ENCODE measurements at regions of chr17 and their contacts with region 1.

Region 1: DNA sequence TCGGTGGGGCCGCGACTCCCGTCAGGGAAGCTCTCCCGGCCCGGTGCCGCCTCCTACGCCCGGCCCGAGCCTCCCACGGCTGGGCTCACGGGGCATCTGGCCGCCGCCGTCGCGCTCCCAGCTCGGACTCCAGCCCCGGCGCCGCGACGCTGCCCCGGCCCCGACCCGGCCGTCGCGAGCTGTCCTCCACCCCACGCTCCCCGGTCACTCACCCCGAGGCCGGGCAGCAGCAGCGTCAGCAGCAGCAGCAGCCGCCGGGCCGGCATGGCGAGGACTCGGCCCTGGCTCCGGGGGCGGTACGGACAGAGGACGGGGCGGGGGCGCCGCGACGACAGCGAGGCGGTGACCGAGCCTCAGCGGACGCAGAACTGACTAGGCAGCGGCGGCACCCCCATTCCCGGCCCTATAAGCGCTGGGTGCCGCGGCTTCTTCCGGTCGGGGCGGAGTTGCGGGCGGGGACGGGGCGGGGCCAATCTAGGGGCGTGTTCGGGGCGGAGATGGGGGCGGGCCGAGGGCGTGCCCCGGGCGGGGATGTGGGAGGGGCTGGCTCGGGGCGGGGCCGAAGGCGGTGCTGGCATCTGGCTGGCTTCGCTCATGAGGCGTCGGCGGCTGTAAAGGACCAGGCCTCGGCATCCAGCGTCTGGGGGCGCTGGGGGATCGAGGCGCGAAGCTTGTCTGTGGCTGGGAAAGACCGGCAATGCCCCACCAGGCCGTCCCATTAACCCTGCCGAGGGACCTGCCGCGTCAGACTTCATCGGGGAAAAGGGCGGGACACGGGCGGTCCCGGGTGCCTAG is at the start of gene ERN1:
- DNase-seq: peak; percentile 99
- H3K4me3 ChIP-seq: peak within 1 kb of the TSS; percentile 72 to 82
- H3K27ac ChIP-seq: peak within 1 kb of the TSS; percentile 62 to 68
- H3K4me1 ChIP-seq: peaks cover 13 to 18% of the 10 kb centered on the region in 2 experiments; a peak in 3 of 4 replicates
- H3K27me3 ChIP-seq: no peaks in the 10 kb centered on the region
- CTCF ChIP-seq: 0 out of 2 replicates have a peak, but pooled peaks have one; percentile 8
- EP300 ChIP-seq: no peak
- RAD21 ChIP-seq: 0 out of 2 replicates have a peak, but pooled peaks have one; percentile 23
- polyA plus RNA-seq, gene ERN1: 6.9 and 7.3 TPM in 2 replicates

Region 2: GRCh38 chr17:63919311-63919723 is 210.6 kb before region 1 on chr17:
- CTCF ChIA-PET with region 1: interaction called, 109 read pairs
- POLR2A ChIA-PET with region 1: interaction called, 3 read pairs
- DNase-seq: peak; percentile 89
- H3K4me3 ChIP-seq: no peak overlapping the region
- H3K27ac ChIP-seq: no peak overlapping the region
- H3K4me1 ChIP-seq: no peaks in the 10 kb centered on the region
- H3K27me3 ChIP-seq: peaks cover 31% of the 10 kb centered on the region
- CTCF ChIP-seq: peak; percentile 96
- EP300 ChIP-seq: no peak
- RAD21 ChIP-seq: peak; percentile 92

Region 3: GRCh38 chr17:64005734-64006167 is 124.2 kb before region 1 on chr17:
- CTCF ChIA-PET with region 1: interaction called, 10 read pairs
- POLR2A ChIA-PET with region 1: no interaction called
- DNase-seq: peak; percentile 76
- H3K4me3 ChIP-seq: no peak overlapping the region
- H3K27ac ChIP-seq: peak overlapping the region in 1 of 2 experiments; percentile 53; a peak in 1 of 4 replicates
- H3K4me1 ChIP-seq: peaks cover 0 to 22% of the 10 kb centered on the region in 2 experiments; a peak in 1 of 4 replicates
- H3K27me3 ChIP-seq: no peaks in the 10 kb centered on the region
- CTCF ChIP-seq: no peak
- EP300 ChIP-seq: no peak
- RAD21 ChIP-seq: no peak

Region 4: GRCh38 chr17:64056269-64057005 is 73.5 kb before region 1 on chr17:
- CTCF ChIA-PET with region 1: interaction called, 160 read pairs
- POLR2A ChIA-PET with region 1: no interaction called
- DNase-seq: no peak
- H3K4me3 ChIP-seq: no peak overlapping the region
- H3K27ac ChIP-seq: no peak overlapping the region
- H3K4me1 ChIP-seq: no peaks in the 10 kb centered on the region
- H3K27me3 ChIP-seq: no peaks in the 10 kb centered on the region
- CTCF ChIP-seq: no peak
- EP300 ChIP-seq: no peak
- RAD21 ChIP-seq: no peak

Region 5: GRCh38 chr17:64103391-64104364 is 26.3 kb before region 1 on chr17:
- CTCF ChIA-PET with region 1: interaction called, 10 read pairs
- POLR2A ChIA-PET with region 1: interaction called, 3 read pairs
- DNase-seq: no peak
- H3K4me3 ChIP-seq: no peak overlapping the region
- H3K27ac ChIP-seq: no peak overlapping the region
- H3K4me1 ChIP-seq: no peaks in the 10 kb centered on the region
- H3K27me3 ChIP-seq: no peaks in the 10 kb centered on the region
- CTCF ChIP-seq: no peak
- EP300 ChIP-seq: no peak; a peak in 1 of 4 replicates
- RAD21 ChIP-seq: no peak

Region 6: GRCh38 chr17:64174686-64175456 is 44.9 kb after region 1 on chr17:
- CTCF ChIA-PET with region 1: interaction called, 12 read pairs
- POLR2A ChIA-PET with region 1: no interaction called
- DNase-seq: no peak
- H3K4me3 ChIP-seq: no peak overlapping the region
- H3K27ac ChIP-seq: peak overlapping the region in 1 of 2 experiments; percentile 41; a peak in 1 of 4 replicates
- H3K4me1 ChIP-seq: peaks cover 16 to 42% of the 10 kb centered on the region in 2 experiments; a peak in 3 of 4 replicates
- H3K27me3 ChIP-seq: no peaks in the 10 kb centered on the region
- CTCF ChIP-seq: no peak
- EP300 ChIP-seq: no peak
- RAD21 ChIP-seq: no peak

Measured in SK-N-SH (cell line).